ENCODE measurements at regions of chr16 and their contacts with region 1.

Region 1: DNA sequence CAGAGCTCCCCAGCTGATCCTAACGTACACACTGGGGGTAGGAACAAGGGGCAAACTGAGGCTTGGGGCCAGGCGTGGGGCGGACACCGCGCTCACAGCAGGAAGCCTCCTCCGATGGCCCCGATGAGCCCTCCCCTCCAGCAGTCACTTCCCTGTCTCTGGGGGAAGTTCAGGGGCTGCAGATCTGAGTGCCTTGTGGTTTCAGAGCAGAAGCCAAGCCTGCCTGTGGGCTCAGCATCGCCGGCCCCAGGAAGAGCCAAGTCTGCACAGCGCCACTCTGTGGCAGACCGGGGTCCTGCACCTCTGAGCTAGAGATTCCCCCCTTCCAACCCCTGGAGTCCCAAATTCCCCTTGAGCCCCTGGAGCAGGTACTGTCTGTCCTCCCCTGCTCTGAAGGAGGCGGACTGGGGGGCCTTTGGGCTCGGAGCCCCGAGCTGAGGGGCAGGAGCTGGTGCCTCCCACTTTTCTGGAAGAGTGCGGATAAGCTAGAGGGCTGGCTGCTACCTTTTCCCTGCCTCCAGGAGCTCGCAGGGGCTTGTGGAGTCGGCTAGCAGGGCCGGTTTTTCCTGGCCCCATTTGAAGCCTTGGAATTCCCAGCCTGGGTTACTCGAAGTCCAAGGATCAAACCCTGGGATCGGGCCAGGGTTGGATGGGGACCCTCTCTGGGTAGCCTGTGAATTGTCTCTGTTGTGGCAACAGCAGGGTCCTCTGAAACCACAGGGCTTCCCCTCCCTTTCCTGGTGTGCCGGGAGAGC is 2.9 kb downstream of the GSE1 start:
- DNase-seq: peak; percentile 59 to 93 (median 86)
- ATAC-seq: peak; percentile 60
- H3K4me3 ChIP-seq: peak overlapping the region; percentile 29 to 47
- H3K4me3 Mint-ChIP-seq: peak overlapping the region; percentile 81
- H3K27ac ChIP-seq: peak overlapping the region; percentile 16 to 33
- H3K27ac Mint-ChIP-seq: peak overlapping the region; percentile 85
- H3K4me1 ChIP-seq: peaks cover 52% of the 10 kb centered on the region
- H3K4me1 Mint-ChIP-seq: peaks cover 49% of the 10 kb centered on the region
- H3K27me3 ChIP-seq: no peaks in the 10 kb centered on the region
- H3K27me3 Mint-ChIP-seq: no peaks in the 10 kb centered on the region
- CTCF ChIP-seq: peak; percentile 96

Region 2: GRCh38 chr16:85305996-85306792 is 309.8 kb before region 1 on chr16:
- CTCF ChIA-PET with region 1: interaction called, 15 read pairs
- POLR2A ChIA-PET with region 1: interaction called, 3 read pairs
- intact Hi-C with region 1: loop called (anchors 2 kb)
- DNase-seq: peak; percentile 54 to 89 (median 82)
- ATAC-seq: peak; percentile 87
- H3K4me3 ChIP-seq: no peak overlapping the region
- H3K4me3 Mint-ChIP-seq: peak overlapping the region; percentile 44
- H3K27ac ChIP-seq: peak overlapping the region in 1 of 2 experiments; percentile 31
- H3K27ac Mint-ChIP-seq: peak overlapping the region; percentile 95
- H3K4me1 ChIP-seq: peaks cover 80% of the 10 kb centered on the region
- H3K4me1 Mint-ChIP-seq: peaks cover 58% of the 10 kb centered on the region
- H3K27me3 ChIP-seq: peaks cover 0 to 6% of the 10 kb centered on the region in 2 experiments
- H3K27me3 Mint-ChIP-seq: no peaks in the 10 kb centered on the region
- CTCF ChIP-seq: no peak

Region 3: GRCh38 chr16:85393674-85394483 is 222.2 kb before region 1 on chr16:
- CTCF ChIA-PET with region 1: interaction called, 9 read pairs
- POLR2A ChIA-PET with region 1: no interaction called
- intact Hi-C with region 1: loop called in 1 of 2 experiments (anchors 1 kb)
- DNase-seq: peak; percentile 45 to 83 (median 69)
- ATAC-seq: peak; percentile 84
- H3K4me3 ChIP-seq: no peak overlapping the region
- H3K4me3 Mint-ChIP-seq: no peak overlapping the region
- H3K27ac ChIP-seq: no peak overlapping the region
- H3K27ac Mint-ChIP-seq: no peak overlapping the region
- H3K4me1 ChIP-seq: no peaks in the 10 kb centered on the region
- H3K4me1 Mint-ChIP-seq: no peaks in the 10 kb centered on the region
- H3K27me3 ChIP-seq: no peaks in the 10 kb centered on the region
- H3K27me3 Mint-ChIP-seq: peaks cover 3% of the 10 kb centered on the region
- CTCF ChIP-seq: peak; percentile 72

Region 4: DNA sequence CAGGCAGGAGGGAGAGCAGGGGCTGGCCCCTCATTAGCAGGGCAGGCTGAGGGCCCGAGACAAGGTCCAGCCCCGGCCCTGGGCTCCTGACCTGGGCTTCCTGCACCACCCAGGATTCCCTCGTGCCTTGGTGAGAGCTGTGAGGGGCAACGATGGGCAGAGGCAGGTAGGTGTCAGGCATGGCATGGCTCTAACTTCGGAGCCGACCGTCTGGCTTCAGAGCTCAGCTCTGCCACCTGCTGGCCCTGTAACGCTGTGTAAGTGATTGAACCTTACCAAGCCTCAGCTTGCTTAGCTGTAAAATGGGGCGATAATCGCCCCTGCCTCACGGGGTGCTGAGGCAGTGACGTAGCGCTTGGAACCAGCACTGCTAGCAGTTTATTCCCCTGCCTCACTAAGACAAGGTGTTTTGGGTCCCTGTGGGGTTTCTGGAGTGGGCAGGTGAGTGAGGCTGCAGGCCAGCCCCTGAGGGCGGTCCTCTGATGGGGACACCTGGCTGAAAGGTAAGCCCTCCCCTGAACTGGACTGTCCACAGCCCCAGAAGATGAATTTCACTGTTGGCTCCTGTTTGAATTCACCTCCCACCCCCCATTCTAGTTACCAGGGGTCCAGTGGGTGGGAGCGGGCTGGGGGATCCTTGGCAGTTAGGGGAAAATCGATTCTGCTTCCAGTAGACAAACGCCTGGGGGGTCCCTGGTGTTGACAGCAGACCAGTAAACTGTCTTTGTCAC is 187.7 kb before region 1 on chr16:
- CTCF ChIA-PET with region 1: interaction called, 100 read pairs
- POLR2A ChIA-PET with region 1: no interaction called
- intact Hi-C with region 1: no loop called
- DNase-seq: peak in 8 of 9 experiments; percentile 29 to 66 (median 53)
- ATAC-seq: peak; percentile 83
- H3K4me3 ChIP-seq: no peak overlapping the region
- H3K4me3 Mint-ChIP-seq: no peak overlapping the region
- H3K27ac ChIP-seq: no peak overlapping the region
- H3K27ac Mint-ChIP-seq: no peak overlapping the region
- H3K4me1 ChIP-seq: no peaks in the 10 kb centered on the region
- H3K4me1 Mint-ChIP-seq: no peaks in the 10 kb centered on the region
- H3K27me3 ChIP-seq: no peaks in the 10 kb centered on the region
- H3K27me3 Mint-ChIP-seq: peaks cover 2% of the 10 kb centered on the region
- CTCF ChIP-seq: peak; percentile 40

Region 5: GRCh38 chr16:85448557-85449197 is 167.4 kb before region 1 on chr16:
- CTCF ChIA-PET with region 1: interaction called, 56 read pairs
- POLR2A ChIA-PET with region 1: interaction called, 38 read pairs
- intact Hi-C with region 1: no loop called
- DNase-seq: peak; percentile 34 to 90 (median 71)
- ATAC-seq: peak; percentile 83
- H3K4me3 ChIP-seq: peak overlapping the region; percentile 0 to 39
- H3K4me3 Mint-ChIP-seq: peak overlapping the region; percentile 70
- H3K27ac ChIP-seq: peak overlapping the region; percentile 52 to 64
- H3K27ac Mint-ChIP-seq: peak overlapping the region; percentile 97
- H3K4me1 ChIP-seq: peaks cover 76% of the 10 kb centered on the region
- H3K4me1 Mint-ChIP-seq: peaks cover 61% of the 10 kb centered on the region
- H3K27me3 ChIP-seq: no peaks in the 10 kb centered on the region
- H3K27me3 Mint-ChIP-seq: no peaks in the 10 kb centered on the region
- CTCF ChIP-seq: no peak

Region 6: DNA sequence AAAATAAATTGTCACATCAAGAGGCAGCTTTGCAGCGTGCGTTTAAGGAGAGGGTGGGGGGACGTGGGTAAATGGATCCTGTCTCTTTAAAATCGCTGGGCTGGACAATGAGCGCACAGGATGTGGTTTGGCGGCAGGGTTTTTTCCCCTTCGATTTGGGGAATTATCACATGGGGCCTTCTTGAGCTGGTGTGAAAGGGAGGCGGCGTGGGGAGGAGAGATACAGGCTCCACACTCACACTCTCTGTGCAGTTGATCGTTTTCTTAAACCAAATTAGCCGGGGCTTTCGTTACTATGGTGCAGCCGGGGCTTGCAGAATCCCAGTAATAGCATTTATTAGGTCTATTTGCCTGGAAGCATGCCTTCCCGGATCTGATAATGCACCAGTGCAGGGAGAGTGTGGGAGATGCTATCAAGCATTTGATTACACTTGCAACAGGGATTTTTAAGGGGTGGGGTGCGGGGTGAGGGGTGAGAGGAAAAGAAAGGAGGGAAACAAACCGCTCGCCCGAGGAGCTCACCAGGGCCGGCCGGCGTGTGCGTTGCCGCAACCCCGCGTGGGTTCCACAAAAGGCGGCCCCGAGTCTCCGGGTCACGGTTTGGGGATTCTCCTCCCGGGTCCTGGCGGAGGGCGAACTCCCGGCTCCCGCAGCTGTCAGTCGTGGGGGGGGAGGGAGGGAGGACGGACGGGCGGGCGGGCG is 61.8 kb before region 1 on chr16:
- CTCF ChIA-PET with region 1: interaction called, 33 read pairs
- POLR2A ChIA-PET with region 1: interaction called, 11 read pairs
- intact Hi-C with region 1: no loop called
- DNase-seq: peak; percentile 43 to 95 (median 75)
- ATAC-seq: peak; percentile 39
- H3K4me3 ChIP-seq: peak overlapping the region; percentile 58 to 94
- H3K4me3 Mint-ChIP-seq: peak overlapping the region; percentile 93
- H3K27ac ChIP-seq: peak overlapping the region; percentile 56 to 85
- H3K27ac Mint-ChIP-seq: peak overlapping the region; percentile 92
- H3K4me1 ChIP-seq: peaks cover 27% of the 10 kb centered on the region
- H3K4me1 Mint-ChIP-seq: peaks cover 37% of the 10 kb centered on the region
- H3K27me3 ChIP-seq: no peaks in the 10 kb centered on the region
- H3K27me3 Mint-ChIP-seq: no peaks in the 10 kb centered on the region
- CTCF ChIP-seq: no peak

Region 7: GRCh38 chr16:85637808-85638647 is 22.0 kb after region 1 on chr16:
- CTCF ChIA-PET with region 1: interaction called, 15 read pairs
- POLR2A ChIA-PET with region 1: no interaction called
- intact Hi-C with region 1: no loop called
- DNase-seq: no peak
- ATAC-seq: no peak
- H3K4me3 ChIP-seq: no peak overlapping the region
- H3K4me3 Mint-ChIP-seq: no peak overlapping the region
- H3K27ac ChIP-seq: no peak overlapping the region
- H3K27ac Mint-ChIP-seq: peak overlapping the region; percentile 22
- H3K4me1 ChIP-seq: no peaks in the 10 kb centered on the region
- H3K4me1 Mint-ChIP-seq: peaks cover 7% of the 10 kb centered on the region
- H3K27me3 ChIP-seq: no peaks in the 10 kb centered on the region
- H3K27me3 Mint-ChIP-seq: no peaks in the 10 kb centered on the region
- CTCF ChIP-seq: no peak

Measured in CD8-positive, alpha-beta T cell (primary cell).